ENCODE measurements at regions of chr6 and their contacts with region 1.

Region 1: DNA sequence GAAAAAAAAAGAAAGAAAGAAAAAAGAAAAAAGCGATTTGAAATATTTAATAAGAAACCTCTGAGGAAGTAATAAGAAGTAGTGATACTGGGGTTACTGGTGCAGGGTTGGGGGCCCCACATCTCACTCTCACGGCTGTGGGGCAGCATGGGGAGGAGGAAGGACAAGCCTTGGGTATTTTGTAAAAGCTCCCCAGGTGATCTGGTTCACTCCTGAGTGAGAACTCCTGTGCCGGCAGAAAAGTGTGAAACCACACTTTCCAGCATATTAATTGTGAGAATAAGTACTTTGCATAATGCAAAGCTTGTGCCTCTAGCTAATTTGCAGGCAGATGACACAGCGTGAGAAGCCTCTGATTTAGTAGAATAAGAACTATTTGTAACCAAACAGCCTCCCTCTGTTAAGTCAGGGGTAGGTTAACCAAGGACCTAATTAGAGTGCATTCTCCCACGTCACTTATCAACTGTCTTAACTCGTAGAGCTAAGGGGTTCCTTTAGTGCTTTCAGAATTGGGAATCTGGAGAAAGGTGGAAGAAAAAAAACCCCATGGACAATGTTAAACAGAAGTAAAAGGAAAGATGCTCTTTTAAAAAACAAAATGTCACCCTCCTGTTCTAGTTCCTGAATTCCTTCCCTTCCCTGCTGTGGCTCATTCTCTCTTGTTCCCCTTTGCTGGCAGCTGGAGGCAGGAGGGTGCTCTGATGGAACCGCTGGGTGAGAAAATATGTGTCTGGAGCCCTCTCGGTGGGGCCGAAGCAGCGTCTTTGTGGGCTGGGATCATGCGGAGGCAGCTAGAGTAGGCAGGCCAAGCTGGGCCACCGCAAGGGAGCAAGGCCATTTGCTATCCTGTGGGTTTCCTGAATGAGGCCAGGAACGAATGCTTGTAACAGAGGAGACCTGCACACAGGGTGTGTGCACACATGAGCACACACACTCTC is 108.7 kb downstream of the FYN start:
- DNase-seq: peak; percentile 81
- ATAC-seq: peak; percentile 56
- H3K4me3 Mint-ChIP-seq: peak overlapping the region; percentile 62
- H3K27ac Mint-ChIP-seq: peak overlapping the region; percentile 99
- H3K4me1 Mint-ChIP-seq: peaks cover 98% of the 10 kb centered on the region
- H3K27me3 Mint-ChIP-seq: no peaks in the 10 kb centered on the region
- CTCF ChIP-seq: no peak

Region 2: GRCh38 chr6:111753573-111753972 is 10.9 kb before region 1 on chr6:
- CTCF ChIA-PET with region 1: interaction called, 6 read pairs
- POLR2A ChIA-PET with region 1: interaction called, 13 read pairs
- intact Hi-C with region 1: no loop called
- DNase-seq: no peak
- ATAC-seq: no peak
- H3K4me3 Mint-ChIP-seq: peak overlapping the region; percentile 77
- H3K27ac Mint-ChIP-seq: peak overlapping the region; percentile 89
- H3K4me1 Mint-ChIP-seq: peaks cover 84% of the 10 kb centered on the region
- H3K27me3 Mint-ChIP-seq: no peaks in the 10 kb centered on the region
- CTCF ChIP-seq: no peak

Region 3: DNA sequence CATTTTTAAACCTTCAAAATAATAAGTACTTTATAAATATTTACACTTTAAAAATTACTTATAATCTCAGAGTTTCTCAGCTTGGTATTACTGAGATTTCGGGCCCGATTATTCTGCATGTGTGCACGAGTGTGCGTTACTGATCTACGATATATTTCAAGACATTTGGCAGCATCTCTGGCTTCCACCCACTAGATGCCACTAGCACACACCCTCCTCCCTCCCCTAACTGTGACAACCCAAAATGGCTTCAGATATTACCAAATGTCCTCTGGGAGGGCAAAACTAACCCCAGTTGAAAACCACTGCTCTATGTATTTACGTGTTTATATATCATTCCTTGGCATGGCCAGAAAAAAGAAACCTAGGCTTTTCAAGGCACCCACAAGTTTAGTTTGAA is 12.8 kb after region 1 on chr6:
- CTCF ChIA-PET with region 1: interaction called, 4 read pairs
- POLR2A ChIA-PET with region 1: interaction called, 10 read pairs
- intact Hi-C with region 1: no loop called
- DNase-seq: no peak
- ATAC-seq: peak; percentile 47
- H3K4me3 Mint-ChIP-seq: no peak overlapping the region
- H3K27ac Mint-ChIP-seq: peak overlapping the region; percentile 82
- H3K4me1 Mint-ChIP-seq: peaks cover 90% of the 10 kb centered on the region
- H3K27me3 Mint-ChIP-seq: no peaks in the 10 kb centered on the region
- CTCF ChIP-seq: no peak

Region 4: GRCh38 chr6:111793711-111794111 is 29.2 kb after region 1 on chr6:
- CTCF ChIA-PET with region 1: interaction called, 11 read pairs
- POLR2A ChIA-PET with region 1: interaction called, 17 read pairs
- intact Hi-C with region 1: no loop called
- DNase-seq: peak; percentile 84
- ATAC-seq: peak; percentile 72
- H3K4me3 Mint-ChIP-seq: peak overlapping the region; percentile 73
- H3K27ac Mint-ChIP-seq: peak overlapping the region; percentile 95
- H3K4me1 Mint-ChIP-seq: peaks cover 71% of the 10 kb centered on the region
- H3K27me3 Mint-ChIP-seq: no peaks in the 10 kb centered on the region
- CTCF ChIP-seq: no peak

Region 5: GRCh38 chr6:111812060-111813038 is 47.8 kb after region 1 on chr6:
- CTCF ChIA-PET with region 1: interaction called, 4 read pairs
- POLR2A ChIA-PET with region 1: interaction called, 11 read pairs
- intact Hi-C with region 1: no loop called
- DNase-seq: no peak
- ATAC-seq: peak; percentile 37
- H3K4me3 Mint-ChIP-seq: peak overlapping the region; percentile 65
- H3K27ac Mint-ChIP-seq: peak overlapping the region; percentile 96
- H3K4me1 Mint-ChIP-seq: peaks cover 85% of the 10 kb centered on the region
- H3K27me3 Mint-ChIP-seq: no peaks in the 10 kb centered on the region
- CTCF ChIP-seq: no peak

Region 6: GRCh38 chr6:111861431-111861885 is 97.0 kb after region 1 on chr6:
- CTCF ChIA-PET with region 1: interaction called, 3 read pairs
- POLR2A ChIA-PET with region 1: interaction called, 10 read pairs
- intact Hi-C with region 1: no loop called
- DNase-seq: no peak
- ATAC-seq: peak; percentile 41
- H3K4me3 Mint-ChIP-seq: peak overlapping the region; percentile 35
- H3K27ac Mint-ChIP-seq: peak overlapping the region; percentile 91
- H3K4me1 Mint-ChIP-seq: peaks cover 99% of the 10 kb centered on the region
- H3K27me3 Mint-ChIP-seq: no peaks in the 10 kb centered on the region
- CTCF ChIP-seq: no peak

Region 7: GRCh38 chr6:111873178-111874024 is 108.9 kb after region 1 on chr6 and contains the start of gene FYN:
- CTCF ChIA-PET with region 1: interaction called, 3 read pairs
- POLR2A ChIA-PET with region 1: interaction called, 7 read pairs
- intact Hi-C with region 1: loop called (anchors 5 kb)
- DNase-seq: peak; percentile 100
- ATAC-seq: peak; percentile 86
- H3K4me3 Mint-ChIP-seq: peak within 1 kb of the TSS; percentile 98
- H3K27ac Mint-ChIP-seq: peak within 1 kb of the TSS; percentile 98
- H3K4me1 Mint-ChIP-seq: peaks cover 30% of the 10 kb centered on the region
- H3K27me3 Mint-ChIP-seq: no peaks in the 10 kb centered on the region
- CTCF ChIP-seq: peak; percentile 45
- total RNA-seq, gene FYN: 384 to 386 TPM

Measured in activated CD8-positive, alpha-beta T cell treated with anti-CD3 and anti-CD28 coated beads for 36 hours (primary cell).